IMR-90 (cell line): ENCODE measurements at regions of chr9 and their contacts with region 1.

Region 1: GRCh38 chr9:124297553-124297905 is 39.8 kb downstream of the NEK6 start:
- DNase-seq: peak; percentile 96
- ATAC-seq: peak; percentile 78
- H3K4me3 ChIP-seq: no peak overlapping the region
- H3K27ac ChIP-seq: peak overlapping the region; percentile 85
- H3K4me1 ChIP-seq: peaks cover 75% of the 10 kb centered on the region
- H3K27me3 ChIP-seq: no peaks in the 10 kb centered on the region
- CTCF ChIP-seq: no peak
- POLR2A ChIP-seq: peak; percentile 31; the same call in 1 of the 2 replicates
- RAD21 ChIP-seq: no peak

Region 2: DNA sequence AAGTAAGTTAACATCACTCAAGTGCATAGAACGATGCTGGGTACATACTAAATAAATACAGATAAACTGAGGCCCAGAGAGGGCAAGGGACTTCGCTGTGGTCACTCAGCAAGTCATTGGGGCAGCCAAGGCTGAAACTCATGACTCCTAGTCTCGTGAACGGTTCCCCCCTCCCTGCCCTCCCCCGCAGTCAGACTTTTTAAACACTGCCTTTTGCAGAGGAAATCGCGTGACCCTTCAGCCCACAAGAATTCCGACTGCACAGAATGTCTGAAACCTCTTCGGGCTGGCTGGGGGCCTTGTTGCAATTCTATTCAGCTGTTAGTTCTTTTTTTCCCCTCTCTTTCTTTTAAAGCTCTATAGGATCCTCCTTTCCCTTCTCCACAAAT is 11.6 kb before region 1 on chr9:
- CTCF ChIA-PET with region 1: no interaction called
- POLR2A ChIA-PET with region 1: no interaction called
- dilution Hi-C with region 1: no loop called
- in situ Hi-C with region 1: no loop called
- intact Hi-C with region 1: loop called (anchors 1 kb)
- DNase-seq: peak; percentile 99
- ATAC-seq: peak; percentile 69
- H3K4me3 ChIP-seq: no peak overlapping the region
- H3K27ac ChIP-seq: peak overlapping the region; percentile 90
- H3K4me1 ChIP-seq: peaks cover 63% of the 10 kb centered on the region
- H3K27me3 ChIP-seq: no peaks in the 10 kb centered on the region
- CTCF ChIP-seq: no peak
- POLR2A ChIP-seq: no peak
- RAD21 ChIP-seq: no peak; the same call in 1 of the 2 replicates